Right lobe of liver (tissue), 6 donors: ENCODE measurements at regions of chr10 and their contacts with region 1.

Region 1: GRCh38 chr10:24008164-24009091 is 200.5 kb upstream of the KIAA1217 start:
- DNase-seq: no peak
- ATAC-seq: no peak
- H3K4me3 ChIP-seq: no peak overlapping the region
- H3K27ac ChIP-seq: no peak overlapping the region
- H3K4me1 ChIP-seq: no peaks in the 10 kb centered on the region
- H3K27me3 ChIP-seq: no peaks in the 10 kb centered on the region
- CTCF ChIP-seq: no peak
- POLR2A ChIP-seq: no peak

Region 2: DNA sequence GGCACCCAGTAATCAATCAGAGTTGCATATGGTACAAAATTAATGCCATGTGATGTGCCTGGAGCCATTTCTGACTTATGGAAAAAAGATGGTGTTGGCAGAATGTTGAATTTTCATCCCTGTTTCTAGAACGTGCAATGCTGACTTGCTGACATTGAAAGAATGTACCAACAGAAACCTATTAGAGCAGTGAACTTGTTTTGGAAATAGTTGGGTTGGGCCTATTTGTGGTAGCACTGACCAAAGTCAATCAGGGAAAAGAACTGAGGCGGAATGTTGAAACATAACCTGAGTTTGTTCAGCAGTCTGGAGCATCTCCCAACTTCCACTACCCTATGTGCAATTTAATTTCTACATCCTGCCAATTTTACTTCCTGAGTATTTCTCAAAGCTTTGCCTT is 188.8 kb after region 1 on chr10:
- intact Hi-C with region 1: loop called in 1 of 2 experiments (anchors 10 kb)
- DNase-seq: no peak
- ATAC-seq: no peak
- H3K4me3 ChIP-seq: no peak overlapping the region
- H3K27ac ChIP-seq: no peak overlapping the region
- H3K4me1 ChIP-seq: no peaks in the 10 kb centered on the region
- H3K27me3 ChIP-seq: no peaks in the 10 kb centered on the region
- CTCF ChIP-seq: no peak
- POLR2A ChIP-seq: no peak